ENCODE measurements at regions of chr9 and their contacts with region 1.

Region 1: GRCh38 chr9:114505187-114506081 is at the start of gene WHRN:
- DNase-seq: peak; percentile 95
- H3K4me3 ChIP-seq: peak within 1 kb of the TSS; percentile 56 to 61
- H3K27ac ChIP-seq: peak within 1 kb of the TSS; percentile 75 to 83
- H3K4me1 ChIP-seq: peaks cover 13% of the 10 kb centered on the region
- H3K27me3 ChIP-seq: no peaks in the 10 kb centered on the region
- CTCF ChIP-seq: no peak
- POLR2A ChIP-seq: peak; percentile 87
- total RNA-seq, gene WHRN: 13.8 to 102 TPM

Region 2: DNA sequence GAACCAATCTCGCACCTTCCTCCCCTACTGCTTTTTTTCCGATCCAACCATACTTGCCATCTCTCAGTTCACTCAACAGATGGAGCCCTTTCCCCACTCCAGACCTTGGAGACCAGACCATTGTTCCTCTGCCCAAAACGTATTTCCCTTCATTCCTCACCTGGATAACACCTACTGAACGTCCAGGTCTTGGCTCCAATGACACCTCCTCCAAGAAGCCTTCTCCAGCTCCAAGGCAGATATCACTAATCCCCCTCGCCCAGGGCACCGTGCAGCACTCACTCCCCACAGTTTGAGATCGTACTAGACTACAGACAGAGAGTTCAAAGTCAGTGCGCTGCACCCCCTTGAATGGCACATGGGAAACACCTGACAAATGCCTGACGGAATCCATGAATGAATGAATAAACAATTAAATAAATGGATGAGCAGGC is 70.5 kb before region 1 on chr9:
- intact Hi-C with region 1: loop called (anchors 5 kb)
- DNase-seq: peak; percentile 39
- H3K4me3 ChIP-seq: no peak overlapping the region
- H3K27ac ChIP-seq: no peak overlapping the region
- H3K4me1 ChIP-seq: no peaks in the 10 kb centered on the region
- H3K27me3 ChIP-seq: no peaks in the 10 kb centered on the region
- CTCF ChIP-seq: peak in 3 of 4 experiments; percentile 35 to 69 (median 69)
- POLR2A ChIP-seq: no peak

Region 3: DNA sequence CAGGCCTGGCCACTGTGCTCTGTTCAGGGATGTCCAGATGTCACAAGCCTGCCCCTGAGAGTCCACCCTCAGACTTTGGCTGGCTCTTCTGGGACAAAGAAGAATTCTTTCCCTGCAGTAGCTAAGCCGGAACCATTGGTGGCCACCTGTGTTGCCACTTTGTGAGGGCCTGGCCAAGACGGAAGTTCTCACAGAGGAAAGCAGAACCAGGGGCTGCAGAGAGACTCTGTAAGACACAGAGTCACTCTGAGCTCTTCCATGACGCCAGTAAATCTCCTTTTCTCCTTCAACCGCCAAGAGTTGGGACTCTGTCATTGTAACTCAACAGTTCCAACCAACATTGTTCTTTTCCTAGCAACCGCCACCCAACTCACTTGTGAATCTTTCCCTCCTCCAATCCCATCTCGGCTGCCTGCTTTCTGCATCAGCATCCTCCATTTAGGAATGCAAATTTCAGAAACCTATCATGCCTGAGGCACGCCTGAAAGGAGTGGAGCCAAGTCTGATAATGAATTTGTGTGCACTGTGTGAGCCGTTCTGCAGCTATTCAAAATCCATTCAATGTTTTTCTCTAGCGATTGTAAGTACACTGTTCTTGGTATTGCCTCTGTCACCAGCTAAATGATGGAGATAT is 44.4 kb after region 1 on chr9:
- intact Hi-C with region 1: no loop called
- DNase-seq: no peak
- H3K4me3 ChIP-seq: no peak overlapping the region
- H3K27ac ChIP-seq: no peak overlapping the region
- H3K4me1 ChIP-seq: no peaks in the 10 kb centered on the region
- H3K27me3 ChIP-seq: no peaks in the 10 kb centered on the region
- CTCF ChIP-seq: no peak
- POLR2A ChIP-seq: no peak

Region 4: GRCh38 chr9:114587385-114588202 is 82.2 kb after region 1 on chr9 and contains the start of gene ATP6V1G1:
- intact Hi-C with region 1: loop called (anchors 5 kb)
- DNase-seq: peak; percentile 99
- H3K4me3 ChIP-seq: peak within 1 kb of the TSS; percentile 72 to 86
- H3K27ac ChIP-seq: peak within 1 kb of the TSS; percentile 95 to 96
- H3K4me1 ChIP-seq: peaks cover 2% of the 10 kb centered on the region
- H3K27me3 ChIP-seq: no peaks in the 10 kb centered on the region
- CTCF ChIP-seq: peak in 2 of 4 experiments; percentile 30 to 31
- POLR2A ChIP-seq: peak; percentile 96
- total RNA-seq, gene ATP6V1G1: 262 to 348 TPM

Measured in prostate gland (tissue), 2 donors.